CD4-positive, alpha-beta T cell (primary cell): ENCODE measurements at regions of chr5 and their contacts with region 1.

Region 1: GRCh38 chr5:77491783-77492652 is at the start of gene WDR41:
- DNase-seq: peak; percentile 66 to 94 (median 82)
- ATAC-seq: peak; percentile 92
- H3K4me3 ChIP-seq: peak within 1 kb of the TSS; percentile 95
- H3K4me3 Mint-ChIP-seq: peak within 1 kb of the TSS; percentile 96
- H3K27ac ChIP-seq: peak within 1 kb of the TSS; percentile 70 to 72
- H3K27ac Mint-ChIP-seq: peak within 1 kb of the TSS; percentile 69
- H3K4me1 ChIP-seq: peaks cover 11% of the 10 kb centered on the region
- H3K4me1 Mint-ChIP-seq: peaks cover 24% of the 10 kb centered on the region
- H3K27me3 ChIP-seq: no peaks in the 10 kb centered on the region
- H3K27me3 Mint-ChIP-seq: peaks cover 33% of the 10 kb centered on the region
- CTCF ChIP-seq: peak; percentile 91
- total RNA-seq, gene WDR41: 4.2 to 4.4 TPM

Region 2: GRCh38 chr5:76292620-76293322 is 1199.2 kb before region 1 on chr5:
- CTCF ChIA-PET with region 1: no interaction called
- POLR2A ChIA-PET with region 1: no interaction called
- intact Hi-C with region 1: no loop called
- DNase-seq: peak in 2 of 14 experiments; percentile 44 to 52
- ATAC-seq: no peak
- H3K4me3 ChIP-seq: no peak overlapping the region
- H3K4me3 Mint-ChIP-seq: no peak overlapping the region
- H3K27ac ChIP-seq: no peak overlapping the region
- H3K27ac Mint-ChIP-seq: no peak overlapping the region
- H3K4me1 ChIP-seq: no peaks in the 10 kb centered on the region
- H3K4me1 Mint-ChIP-seq: peaks cover 3% of the 10 kb centered on the region
- H3K27me3 ChIP-seq: no peaks in the 10 kb centered on the region
- H3K27me3 Mint-ChIP-seq: peaks cover 9% of the 10 kb centered on the region
- CTCF ChIP-seq: no peak

Region 3: GRCh38 chr5:77076961-77077823 is 414.8 kb before region 1 on chr5:
- CTCF ChIA-PET with region 1: no interaction called
- POLR2A ChIA-PET with region 1: no interaction called
- intact Hi-C with region 1: loop called in 1 of 2 experiments (anchors 10 kb)
- DNase-seq: peak in 12 of 14 experiments; percentile 14 to 73 (median 42)
- ATAC-seq: peak; percentile 80
- H3K4me3 ChIP-seq: peak overlapping the region; percentile 19
- H3K4me3 Mint-ChIP-seq: peak overlapping the region; percentile 68
- H3K27ac ChIP-seq: no peak overlapping the region
- H3K27ac Mint-ChIP-seq: no peak overlapping the region
- H3K4me1 ChIP-seq: peaks cover 7% of the 10 kb centered on the region
- H3K4me1 Mint-ChIP-seq: peaks cover 7% of the 10 kb centered on the region
- H3K27me3 ChIP-seq: no peaks in the 10 kb centered on the region
- H3K27me3 Mint-ChIP-seq: no peaks in the 10 kb centered on the region
- CTCF ChIP-seq: peak; percentile 42